Heart right ventricle (tissue), 16 donors: ENCODE measurements at regions of chr9 and their contacts with region 1.

Region 1: DNA sequence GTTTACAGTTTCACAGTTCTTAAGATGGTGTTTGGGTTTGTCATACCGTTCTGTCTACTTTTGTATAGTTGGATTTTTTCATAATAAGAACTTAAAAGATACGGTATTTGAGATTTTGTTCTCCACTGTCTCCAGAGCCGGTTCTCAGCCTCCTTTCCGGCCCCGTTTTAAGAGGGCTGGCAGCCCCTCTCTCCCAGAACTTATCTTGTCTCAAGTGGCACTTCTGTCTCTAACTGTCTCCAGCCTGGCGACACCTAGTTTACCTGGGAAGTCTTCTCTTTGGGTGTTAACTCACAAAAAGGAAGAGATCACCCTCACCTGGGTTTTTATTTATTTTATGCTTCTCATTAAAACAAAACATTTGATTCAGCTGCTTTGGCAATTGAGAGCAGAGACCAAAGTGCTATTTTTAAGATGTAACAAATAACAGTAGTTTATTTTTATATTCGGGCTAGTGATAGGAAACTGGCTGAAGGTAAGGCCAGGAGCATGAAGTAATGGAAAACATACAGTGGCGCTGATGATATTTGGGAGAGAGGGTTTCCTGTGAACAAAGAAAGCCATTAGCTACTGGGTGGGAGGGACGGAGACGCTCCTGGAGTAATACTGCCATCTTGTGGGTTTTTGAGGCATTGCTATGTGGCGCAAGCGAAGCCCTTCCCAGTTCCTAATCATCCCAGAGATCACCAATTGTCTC is 48.3 kb downstream of the ACER2 start:
- DNase-seq: peak in 1 of 2 donors; percentile 80
- ATAC-seq: peak; percentile 88 to 99 (median 96)
- H3K4me3 ChIP-seq: peak overlapping the region in 8 of 10 donors; percentile 14 to 38 (median 30)
- H3K27ac ChIP-seq: peak overlapping the region; percentile 12 to 85 (median 58)
- H3K4me1 ChIP-seq: peaks cover 3 to 17% (median 11%) of the 10 kb centered on the region in 9 donors
- H3K27me3 ChIP-seq: no peaks in the 10 kb centered on the region
- CTCF ChIP-seq: peak; percentile 87 to 99 (median 98)

Region 2: DNA sequence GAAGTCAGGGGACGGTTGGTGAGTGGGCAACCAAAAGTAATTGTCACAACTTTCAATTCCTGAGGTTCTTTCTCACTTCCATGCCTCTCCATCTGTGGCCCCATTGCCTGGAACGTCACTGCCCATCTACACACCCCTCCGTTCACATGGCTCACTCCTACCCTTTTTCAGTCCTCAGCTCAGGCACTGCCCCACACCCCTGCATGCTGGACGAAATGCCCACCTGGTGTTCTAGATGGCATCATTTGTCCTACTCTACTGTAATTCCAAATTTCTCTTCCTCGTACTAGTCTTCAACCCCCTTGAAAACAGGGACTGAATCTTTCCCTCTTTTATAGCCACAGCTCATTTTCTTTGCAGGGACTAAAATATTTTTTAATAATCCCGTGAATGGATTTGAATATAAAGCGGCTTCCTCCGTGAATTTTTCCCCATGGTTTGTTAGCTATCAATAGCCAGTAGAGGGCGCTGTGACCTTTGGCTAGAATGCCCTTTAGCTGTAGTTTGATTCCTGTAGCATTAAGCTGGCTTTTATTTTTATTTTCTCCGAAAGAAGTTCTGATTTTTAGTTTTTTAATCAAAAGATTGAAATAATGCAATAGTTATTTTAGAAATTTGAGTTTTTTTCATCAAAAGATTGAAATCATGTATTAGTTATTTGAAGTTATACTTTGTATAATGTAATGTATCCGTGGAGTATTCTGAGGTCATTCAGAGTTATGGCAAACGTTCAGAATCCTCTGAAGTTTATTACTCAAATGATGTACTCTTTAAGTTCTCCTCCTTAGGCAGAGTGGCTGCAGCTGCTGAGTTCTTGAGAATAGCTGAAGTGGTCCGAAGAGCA is 1646.2 kb before region 1 on chr9:
- intact Hi-C with region 1: loop called in 1 of 10 experiments (anchors 10 kb)
- DNase-seq: peak in 1 of 2 donors; percentile 44
- ATAC-seq: no peak
- H3K4me3 ChIP-seq: no peak overlapping the region
- H3K27ac ChIP-seq: no peak overlapping the region
- H3K4me1 ChIP-seq: no peaks in the 10 kb centered on the region
- H3K27me3 ChIP-seq: peaks cover 0 to 26% (median 5%) of the 10 kb centered on the region in 7 donors
- CTCF ChIP-seq: peak; percentile 75 to 90 (median 84)

Region 3: DNA sequence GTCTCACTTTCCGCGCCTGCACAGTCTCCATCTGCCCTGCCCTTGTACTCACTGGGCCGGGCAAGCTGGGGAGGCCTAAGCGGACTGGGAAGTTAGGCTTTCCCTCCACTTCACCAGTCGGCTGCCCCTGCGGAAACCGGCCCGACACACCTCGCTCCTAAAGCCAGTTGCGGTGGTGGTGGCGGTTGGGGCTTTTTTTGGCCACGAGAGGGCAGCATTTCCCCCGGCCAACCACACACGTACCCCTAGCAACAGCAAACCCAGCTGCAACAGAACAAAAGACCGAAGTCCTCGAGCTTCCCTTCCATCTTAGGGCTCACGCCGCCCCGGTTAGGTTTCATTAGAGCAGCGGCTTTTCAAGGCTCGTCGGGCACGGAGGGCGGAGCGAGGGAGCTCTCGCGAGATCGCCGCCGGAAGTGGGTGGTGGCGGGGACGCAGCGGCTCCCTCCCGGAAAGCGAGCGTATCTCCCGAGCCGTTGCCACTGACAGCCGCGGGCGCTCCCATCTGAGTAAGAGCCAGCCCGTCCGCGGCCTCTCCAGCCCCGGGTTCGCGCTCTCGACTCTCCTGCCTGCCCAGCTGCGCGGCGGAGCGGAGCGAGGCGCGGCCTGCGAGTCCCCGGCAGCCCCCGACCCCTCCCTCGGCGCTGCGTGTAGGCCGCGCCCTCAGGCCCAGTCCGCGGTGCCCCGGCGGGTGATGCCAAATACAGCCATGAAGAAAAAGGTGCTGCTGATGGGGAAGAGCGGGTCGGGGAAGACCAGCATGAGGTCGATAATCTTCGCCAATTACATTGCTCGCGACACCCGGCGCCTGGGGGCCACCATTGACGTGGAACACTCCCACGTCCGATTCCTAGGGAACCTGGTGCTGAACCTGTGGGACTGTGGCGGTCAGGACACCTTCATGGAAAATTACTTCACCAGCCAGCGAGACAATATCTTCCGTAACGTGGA is 407.9 kb before region 1 on chr9 and contains the start of gene RRAGA:
- intact Hi-C with region 1: loop called in 4 of 10 experiments (anchors 1 to 5 kb)
- DNase-seq: peak; percentile 94 to 95
- ATAC-seq: peak; percentile 96 to 98 (median 97)
- H3K4me3 ChIP-seq: peak within 1 kb of the TSS; percentile 64 to 89 (median 80)
- H3K27ac ChIP-seq: peak within 1 kb of the TSS; percentile 88 to 97 (median 95)
- H3K4me1 ChIP-seq: peaks cover 4 to 52% (median 31%) of the 10 kb centered on the region in 9 donors
- H3K27me3 ChIP-seq: no peaks in the 10 kb centered on the region
- CTCF ChIP-seq: peak; percentile 79 to 94 (median 87)
- total RNA-seq, gene RRAGA: 74.7 to 97.8 (median 81.3) TPM

Region 4: GRCh38 chr9:19102631-19103345 is 354.4 kb before region 1 on chr9 and contains the start of gene HAUS6:
- intact Hi-C with region 1: loop called in 1 of 10 experiments (anchors 5 kb)
- DNase-seq: peak; percentile 95 to 97
- ATAC-seq: peak; percentile 99 to 100 (median 100)
- H3K4me3 ChIP-seq: peak within 1 kb of the TSS; percentile 64 to 91 (median 78)
- H3K27ac ChIP-seq: peak within 1 kb of the TSS; percentile 44 to 91 (median 90)
- H3K4me1 ChIP-seq: peaks cover 0 to 26% (median 17%) of the 10 kb centered on the region in 9 donors
- H3K27me3 ChIP-seq: no peaks in the 10 kb centered on the region
- CTCF ChIP-seq: peak; percentile 22 to 71 (median 50)
- total RNA-seq, gene HAUS6: 4.9 to 10.4 (median 7.2) TPM

Region 5: GRCh38 chr9:19174127-19174912 is 282.8 kb before region 1 on chr9:
- intact Hi-C with region 1: loop called in 4 of 10 experiments (anchors 2 to 10 kb)
- DNase-seq: peak; percentile 50 to 64
- ATAC-seq: peak; percentile 72 to 96 (median 86)
- H3K4me3 ChIP-seq: peak overlapping the region in 2 of 10 donors; percentile 2 to 7
- H3K27ac ChIP-seq: peak overlapping the region in 1 of 10 donors; percentile 46
- H3K4me1 ChIP-seq: peaks cover 0 to 30% (median 11%) of the 10 kb centered on the region in 9 donors
- H3K27me3 ChIP-seq: no peaks in the 10 kb centered on the region
- CTCF ChIP-seq: peak; percentile 27 to 80 (median 71)

Region 6: DNA sequence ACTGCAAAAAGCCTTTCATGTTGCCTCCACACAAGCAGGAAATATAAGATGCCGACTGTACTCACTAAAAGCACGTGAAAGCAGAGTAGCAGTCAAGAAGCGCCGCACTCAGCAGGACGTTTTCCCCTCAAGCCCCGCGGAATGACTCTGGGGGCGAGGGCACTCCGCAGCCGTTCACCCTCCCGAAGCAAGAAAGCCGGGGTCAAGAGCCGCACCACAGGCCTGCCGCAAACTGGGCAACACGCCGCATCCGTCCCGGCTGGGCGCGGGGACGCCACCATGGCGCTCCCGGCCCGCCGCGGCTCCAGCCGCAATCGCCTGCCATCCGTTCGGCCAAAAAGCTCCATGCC is 77.5 kb before region 1 on chr9:
- intact Hi-C with region 1: loop called in 8 of 10 experiments (anchors 1 to 10 kb)
- DNase-seq: peak; percentile 37 to 50
- ATAC-seq: peak; percentile 42 to 76 (median 68)
- H3K4me3 ChIP-seq: peak overlapping the region; percentile 56 to 86 (median 72)
- H3K27ac ChIP-seq: peak overlapping the region; percentile 83 to 96 (median 88)
- H3K4me1 ChIP-seq: peaks cover 0 to 40% (median 27%) of the 10 kb centered on the region in 9 donors
- H3K27me3 ChIP-seq: no peaks in the 10 kb centered on the region
- CTCF ChIP-seq: no peak

Region 7: GRCh38 chr9:19493174-19493811 is 36.1 kb after region 1 on chr9:
- intact Hi-C with region 1: no loop called
- DNase-seq: peak; percentile 73 to 79
- ATAC-seq: peak; percentile 79 to 94 (median 82)
- H3K4me3 ChIP-seq: peak overlapping the region in 7 of 10 donors; percentile 13 to 45 (median 33)
- H3K27ac ChIP-seq: peak overlapping the region in 8 of 10 donors; percentile 18 to 72 (median 57)
- H3K4me1 ChIP-seq: peaks cover 0 to 20% (median 11%) of the 10 kb centered on the region in 9 donors
- H3K27me3 ChIP-seq: peaks cover 0 to 9% (median 0%) of the 10 kb centered on the region in 7 donors
- CTCF ChIP-seq: peak; percentile 56 to 83 (median 73)

Region 8: GRCh38 chr9:19568946-19569345 is 111.8 kb after region 1 on chr9:
- intact Hi-C with region 1: no loop called
- DNase-seq: no peak
- ATAC-seq: no peak
- H3K4me3 ChIP-seq: no peak overlapping the region
- H3K27ac ChIP-seq: no peak overlapping the region
- H3K4me1 ChIP-seq: no peaks in the 10 kb centered on the region
- H3K27me3 ChIP-seq: peaks cover 0 to 6% (median 0%) of the 10 kb centered on the region in 7 donors
- CTCF ChIP-seq: no peak